PC-9 (cell line): ENCODE measurements at regions of chr5 and their contacts with region 1.

Region 1: DNA sequence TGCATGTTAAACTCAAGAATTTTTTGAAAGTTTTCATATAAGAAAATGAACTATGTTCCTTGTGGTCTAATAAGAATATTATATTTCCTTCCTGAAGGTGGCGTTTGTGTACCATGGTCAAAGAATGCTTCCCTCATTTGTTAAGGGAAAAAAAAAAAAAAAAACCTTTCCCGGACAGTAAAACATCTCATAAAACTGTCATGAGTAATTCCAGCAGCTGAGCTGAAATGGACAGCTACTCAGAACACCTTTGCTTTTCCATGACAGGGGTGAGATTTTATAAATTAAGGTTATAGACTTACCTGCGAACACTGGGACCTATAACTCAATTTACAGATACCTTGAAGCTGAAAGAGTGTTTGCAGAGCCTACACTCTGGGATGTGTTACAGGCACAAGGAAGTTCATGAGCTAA is 113.2 kb upstream of the RANBP3L start:
- DNase-seq: peak in 1 of 2 experiments; percentile 85
- H3K4me3 ChIP-seq: no peak overlapping the region
- H3K27ac ChIP-seq: no peak overlapping the region
- H3K4me1 ChIP-seq: peaks cover 47% of the 10 kb centered on the region
- H3K27me3 ChIP-seq: no peaks in the 10 kb centered on the region
- CTCF ChIP-seq: peak; percentile 88

Region 2: GRCh38 chr5:36373527-36374086 is 41.3 kb before region 1 on chr5:
- CTCF ChIA-PET with region 1: no interaction called
- POLR2A ChIA-PET with region 1: no interaction called
- intact Hi-C with region 1: no loop called
- DNase-seq: peak in 1 of 2 experiments; percentile 46
- H3K4me3 ChIP-seq: no peak overlapping the region
- H3K27ac ChIP-seq: no peak overlapping the region
- H3K4me1 ChIP-seq: no peaks in the 10 kb centered on the region
- H3K27me3 ChIP-seq: no peaks in the 10 kb centered on the region; the same call in 1 of the 2 replicates
- CTCF ChIP-seq: no peak

Region 3: GRCh38 chr5:36507332-36507952 is 92.6 kb after region 1 on chr5:
- CTCF ChIA-PET with region 1: no interaction called
- POLR2A ChIA-PET with region 1: no interaction called
- intact Hi-C with region 1: loop called (anchors 1 kb)
- DNase-seq: peak; percentile 52 to 74
- H3K4me3 ChIP-seq: no peak overlapping the region
- H3K27ac ChIP-seq: no peak overlapping the region
- H3K4me1 ChIP-seq: peaks cover 14% of the 10 kb centered on the region
- H3K27me3 ChIP-seq: no peaks in the 10 kb centered on the region
- CTCF ChIP-seq: peak; percentile 98

Region 4: DNA sequence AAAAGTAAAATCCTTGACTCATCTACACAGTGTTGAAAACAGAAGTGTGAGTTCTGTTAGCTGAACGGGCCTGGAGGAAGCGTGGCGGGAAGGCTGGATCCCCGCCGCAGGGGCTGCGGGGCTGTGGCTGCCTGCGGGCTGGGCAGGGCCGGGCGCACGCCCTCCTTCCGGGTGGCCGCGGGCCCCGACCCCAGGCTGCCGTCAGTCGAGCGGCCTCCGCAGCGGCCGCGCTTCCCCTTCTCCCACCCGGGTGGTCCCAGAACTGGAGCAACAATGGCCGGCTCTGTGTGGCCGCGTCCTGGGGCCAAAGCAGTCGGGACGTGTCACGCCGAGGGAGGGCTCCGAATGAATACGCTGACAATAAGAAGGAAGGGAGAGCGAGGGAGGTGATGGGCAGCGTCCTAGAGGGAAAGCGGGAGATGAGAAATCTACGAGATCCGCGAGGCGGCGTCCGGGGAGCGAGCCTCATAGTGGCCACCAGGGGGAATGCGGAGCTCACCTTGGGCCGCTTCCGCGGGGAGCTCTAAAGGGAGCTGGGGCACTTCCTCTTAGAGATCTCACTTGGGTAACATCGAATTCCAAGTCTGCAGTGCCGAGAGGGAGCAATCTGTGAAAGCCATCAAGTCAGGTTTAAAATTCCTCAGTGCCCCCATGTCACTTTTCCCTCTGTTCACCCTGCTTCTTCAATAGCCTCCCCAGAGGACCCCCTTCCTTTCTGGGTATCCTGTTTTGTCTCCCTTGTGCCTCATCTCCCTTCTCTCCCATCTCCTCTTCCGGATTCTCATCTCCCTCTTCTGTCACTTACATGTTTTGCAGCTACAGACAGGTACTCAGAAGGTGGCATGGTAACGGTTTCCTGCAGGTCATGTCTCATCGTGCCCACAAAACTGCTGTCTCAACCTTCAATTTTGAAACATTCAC is 275.4 kb after region 1 on chr5:
- CTCF ChIA-PET with region 1: interaction called, 9 read pairs
- POLR2A ChIA-PET with region 1: no interaction called
- intact Hi-C with region 1: loop called (anchors 1 kb)
- DNase-seq: peak; percentile 25 to 56
- H3K4me3 ChIP-seq: no peak overlapping the region
- H3K27ac ChIP-seq: no peak overlapping the region
- H3K4me1 ChIP-seq: peaks cover 5% of the 10 kb centered on the region; the same call in 1 of the 2 replicates
- H3K27me3 ChIP-seq: no peaks in the 10 kb centered on the region
- CTCF ChIP-seq: no peak

Region 5: GRCh38 chr5:36695677-36696673 is 281.1 kb after region 1 on chr5:
- CTCF ChIA-PET with region 1: interaction called, 15 read pairs
- POLR2A ChIA-PET with region 1: no interaction called
- intact Hi-C with region 1: loop called (anchors 1 kb)
- DNase-seq: peak; percentile 55 to 65
- H3K4me3 ChIP-seq: no peak overlapping the region
- H3K27ac ChIP-seq: no peak overlapping the region
- H3K4me1 ChIP-seq: peaks cover 5% of the 10 kb centered on the region; the same call in 1 of the 2 replicates
- H3K27me3 ChIP-seq: no peaks in the 10 kb centered on the region
- CTCF ChIP-seq: peak; percentile 97